ENCODE measurements at regions of chr2 and their contacts with region 1.

Region 1: DNA sequence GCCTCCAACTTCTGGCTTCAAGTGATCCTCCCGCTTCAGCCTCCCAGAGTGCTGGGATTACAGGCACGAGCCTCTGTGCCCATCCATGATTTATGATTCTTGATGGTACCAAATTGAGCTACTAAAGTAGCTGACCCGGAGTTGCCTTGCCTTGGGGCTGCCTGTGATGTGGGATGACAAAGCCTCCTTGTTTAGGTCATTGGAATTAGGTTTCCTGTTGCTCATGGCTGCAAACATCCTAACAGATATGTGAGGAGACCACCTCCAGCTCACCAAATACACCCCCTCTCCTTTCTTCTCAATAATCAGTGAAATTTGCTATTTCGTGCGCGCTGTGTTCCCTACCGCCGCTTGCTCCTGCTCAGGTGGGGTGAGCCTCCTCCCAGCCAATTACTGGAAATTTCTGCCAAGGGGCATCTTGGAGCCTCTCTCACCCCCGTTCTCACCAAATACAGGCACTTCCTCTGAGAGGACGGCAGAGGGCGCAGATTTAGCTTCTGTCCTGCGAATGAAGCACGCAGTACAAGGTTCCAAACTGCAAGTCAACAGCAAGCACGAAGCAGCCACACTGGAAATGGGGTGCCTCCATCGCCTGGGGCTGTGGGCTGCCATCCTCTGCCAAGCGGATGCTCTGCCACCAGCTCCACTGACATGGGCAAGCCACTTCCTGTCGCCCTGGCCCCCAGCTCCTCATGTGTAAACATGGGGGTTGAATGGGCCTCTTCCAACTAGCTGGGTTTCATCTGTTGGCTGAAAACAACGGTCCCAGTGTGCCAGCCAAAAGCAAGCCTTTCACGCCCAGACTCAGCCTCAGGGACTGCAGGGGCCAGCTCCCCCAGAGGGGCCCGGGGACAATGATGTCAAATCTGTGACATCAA is 71.7 kb downstream of the NCAPH start:
- DNase-seq: peak; percentile 53 to 78
- H3K4me3 ChIP-seq: no peak overlapping the region
- H3K27ac ChIP-seq: no peak overlapping the region
- H3K4me1 ChIP-seq: peaks cover 3 to 7% (median 4%) of the 10 kb centered on the region in 4 experiments
- H3K27me3 ChIP-seq: no peaks in the 10 kb centered on the region; a peak in 1 of 7 replicates
- CTCF ChIP-seq: peak; percentile 78 to 92 (median 88)
- EP300 ChIP-seq: no peak
- POLR2A ChIP-seq: no peak
- RAD21 ChIP-seq: peak; percentile 72 to 81

Region 2: GRCh38 chr2:96248624-96249023 is 158.7 kb before region 1 on chr2:
- CTCF ChIA-PET with region 1: no interaction called
- POLR2A ChIA-PET with region 1: no interaction called
- DNase-seq: no peak
- H3K4me3 ChIP-seq: no peak overlapping the region
- H3K27ac ChIP-seq: no peak overlapping the region
- H3K4me1 ChIP-seq: no peaks in the 10 kb centered on the region
- H3K27me3 ChIP-seq: no peaks in the 10 kb centered on the region
- CTCF ChIP-seq: no peak
- EP300 ChIP-seq: no peak
- POLR2A ChIP-seq: no peak
- RAD21 ChIP-seq: no peak

Region 3: DNA sequence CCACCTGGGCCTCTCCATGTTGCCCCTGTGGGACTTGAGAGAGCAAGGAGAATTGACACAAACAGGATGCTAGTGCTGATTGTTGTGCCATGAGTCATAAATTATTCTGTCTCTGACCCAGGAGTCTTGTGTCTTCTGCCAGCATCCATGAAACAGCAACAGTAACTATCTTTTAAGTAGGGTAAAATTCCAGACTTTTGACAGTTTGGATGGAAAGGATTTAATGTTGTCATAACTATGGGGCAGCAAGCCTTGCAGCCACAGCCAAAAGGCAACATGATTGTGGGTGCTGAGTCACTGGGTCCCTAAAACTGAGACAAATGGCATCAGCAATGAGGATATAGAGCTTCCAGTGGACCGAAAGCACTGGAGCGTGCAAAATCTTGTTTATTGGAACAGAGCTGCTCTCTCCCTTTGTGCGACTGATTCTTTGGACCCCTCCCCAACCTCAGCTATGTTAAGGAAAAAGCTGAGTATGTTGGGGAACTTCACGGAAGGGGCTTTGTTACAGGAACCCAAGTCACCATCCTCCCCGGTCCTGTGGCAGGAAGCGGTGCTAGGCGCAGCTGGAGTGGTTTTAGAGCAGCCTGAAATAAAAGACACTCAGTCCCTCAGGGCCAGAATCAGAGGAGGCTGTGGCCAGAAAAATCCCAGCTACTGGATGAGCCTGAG is 91.7 kb before region 1 on chr2:
- CTCF ChIA-PET with region 1: no interaction called
- POLR2A ChIA-PET with region 1: no interaction called
- DNase-seq: no peak
- H3K4me3 ChIP-seq: no peak overlapping the region
- H3K27ac ChIP-seq: no peak overlapping the region
- H3K4me1 ChIP-seq: no peaks in the 10 kb centered on the region
- H3K27me3 ChIP-seq: peaks cover 0 to 11% (median 8%) of the 10 kb centered on the region in 4 experiments; a peak in 6 of 7 replicates
- CTCF ChIP-seq: no peak
- EP300 ChIP-seq: no peak
- POLR2A ChIP-seq: no peak
- RAD21 ChIP-seq: no peak

Region 4: DNA sequence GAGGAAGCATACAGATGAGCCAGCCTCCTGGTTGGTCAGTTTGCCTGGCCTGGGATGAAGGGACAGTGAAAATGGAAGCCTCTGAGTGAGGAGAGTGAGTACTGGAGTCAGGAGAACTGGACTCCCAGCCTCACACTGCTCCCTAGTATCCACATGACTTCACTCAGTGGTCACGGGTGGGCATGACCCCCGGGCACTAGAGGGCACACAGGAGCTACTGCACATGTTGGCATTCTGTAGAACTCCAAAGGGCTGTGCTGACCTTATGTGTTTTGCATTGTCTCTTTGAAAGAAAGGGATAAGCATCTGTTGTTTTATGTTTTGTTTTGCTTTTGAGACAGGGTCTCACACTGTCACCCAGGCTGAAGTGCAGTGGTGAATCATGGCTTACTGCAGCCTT is 48.0 kb before region 1 on chr2:
- CTCF ChIA-PET with region 1: interaction called, 11 read pairs
- POLR2A ChIA-PET with region 1: no interaction called
- DNase-seq: no peak
- H3K4me3 ChIP-seq: no peak overlapping the region
- H3K27ac ChIP-seq: no peak overlapping the region
- H3K4me1 ChIP-seq: no peaks in the 10 kb centered on the region
- H3K27me3 ChIP-seq: no peaks in the 10 kb centered on the region
- CTCF ChIP-seq: peak; percentile 24 to 42 (median 32); a peak in 3 of 4 replicates
- EP300 ChIP-seq: no peak
- POLR2A ChIP-seq: no peak
- RAD21 ChIP-seq: peak; percentile 37 to 51; a peak in 3 of 4 replicates

Region 5: DNA sequence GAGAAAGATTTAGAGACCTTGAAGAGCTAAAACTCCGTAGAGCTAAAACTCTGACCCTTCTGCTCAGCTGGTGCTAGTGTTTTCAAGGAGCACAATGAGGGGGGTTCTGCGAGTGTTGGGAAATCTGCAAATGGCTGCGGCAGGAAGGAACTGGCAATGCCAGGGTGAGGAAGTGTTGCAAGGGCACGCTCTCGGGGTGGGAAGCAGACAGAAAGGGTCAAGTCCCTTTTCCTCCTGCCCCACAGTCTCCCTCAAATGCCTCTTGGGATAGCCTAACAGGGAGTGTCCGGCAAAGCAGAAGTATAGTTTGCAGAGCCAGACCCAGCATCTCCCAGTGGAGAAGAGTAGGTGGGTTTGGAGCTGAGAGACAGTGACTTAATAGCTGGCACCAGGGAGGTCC is 11.2 kb before region 1 on chr2:
- CTCF ChIA-PET with region 1: interaction called, 28 read pairs
- POLR2A ChIA-PET with region 1: interaction called, 3 read pairs
- DNase-seq: no peak
- H3K4me3 ChIP-seq: no peak overlapping the region
- H3K27ac ChIP-seq: no peak overlapping the region
- H3K4me1 ChIP-seq: peaks cover 0 to 5% (median 0%) of the 10 kb centered on the region in 4 experiments; a peak in 1 of 7 replicates
- H3K27me3 ChIP-seq: no peaks in the 10 kb centered on the region
- CTCF ChIP-seq: no peak
- EP300 ChIP-seq: no peak
- POLR2A ChIP-seq: no peak
- RAD21 ChIP-seq: no peak

Region 6: GRCh38 chr2:96449637-96450036 is 42.4 kb after region 1 on chr2:
- CTCF ChIA-PET with region 1: interaction called, 10 read pairs
- POLR2A ChIA-PET with region 1: interaction called, 3 read pairs
- DNase-seq: no peak
- H3K4me3 ChIP-seq: no peak overlapping the region
- H3K27ac ChIP-seq: no peak overlapping the region
- H3K4me1 ChIP-seq: no peaks in the 10 kb centered on the region
- H3K27me3 ChIP-seq: no peaks in the 10 kb centered on the region
- CTCF ChIP-seq: no peak
- EP300 ChIP-seq: no peak
- POLR2A ChIP-seq: no peak
- RAD21 ChIP-seq: no peak

Region 7: DNA sequence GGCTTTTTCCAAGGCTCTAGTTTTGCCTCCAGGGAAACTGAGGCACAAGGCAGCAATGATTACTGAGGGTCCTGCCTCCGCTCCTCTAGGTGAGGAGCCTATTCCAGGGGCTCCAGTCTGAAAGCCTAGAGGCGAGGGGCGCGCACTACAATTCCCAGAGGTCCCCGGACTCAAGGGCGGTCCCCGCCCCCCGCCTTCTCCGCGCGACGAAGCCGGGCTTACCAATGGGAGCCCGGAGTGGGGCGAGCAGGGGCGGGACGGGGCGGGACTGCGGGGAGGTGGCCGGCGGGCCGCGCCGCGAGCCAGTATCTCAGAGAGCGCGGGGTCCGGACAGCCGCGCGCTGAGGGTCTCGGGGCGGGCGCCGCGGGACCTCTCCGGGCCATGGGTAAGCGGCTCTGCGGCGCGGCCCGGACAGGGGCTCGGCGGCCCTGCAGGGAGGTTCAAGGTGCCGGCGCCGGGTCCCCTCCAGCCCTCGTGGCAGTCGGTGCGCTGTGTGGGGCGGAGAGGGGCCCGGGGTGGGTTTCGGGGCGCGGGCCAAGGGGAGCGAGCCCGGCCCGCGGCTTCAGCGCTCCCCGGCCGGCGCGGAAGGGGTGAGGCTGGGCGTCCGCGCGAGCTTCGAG is 129.3 kb after region 1 on chr2 and contains the start of gene ARID5A:
- CTCF ChIA-PET with region 1: interaction called, 12 read pairs
- POLR2A ChIA-PET with region 1: no interaction called
- DNase-seq: peak; percentile 73 to 89
- H3K4me3 ChIP-seq: peak within 1 kb of the TSS; percentile 19 to 73 (median 53)
- H3K27ac ChIP-seq: no peak within 1 kb of the TSS
- H3K4me1 ChIP-seq: peaks cover 5 to 26% (median 20%) of the 10 kb centered on the region in 4 experiments
- H3K27me3 ChIP-seq: peaks cover 10 to 32% (median 26%) of the 10 kb centered on the region in 4 experiments; a peak in 6 of 7 replicates
- CTCF ChIP-seq: no peak
- EP300 ChIP-seq: no peak
- POLR2A ChIP-seq: peak in 1 of 2 experiments; percentile 44; a peak in 2 of 3 replicates
- RAD21 ChIP-seq: no peak
- total RNA-seq, gene ARID5A: 4.4 and 5.3 TPM in 2 replicates

Region 8: DNA sequence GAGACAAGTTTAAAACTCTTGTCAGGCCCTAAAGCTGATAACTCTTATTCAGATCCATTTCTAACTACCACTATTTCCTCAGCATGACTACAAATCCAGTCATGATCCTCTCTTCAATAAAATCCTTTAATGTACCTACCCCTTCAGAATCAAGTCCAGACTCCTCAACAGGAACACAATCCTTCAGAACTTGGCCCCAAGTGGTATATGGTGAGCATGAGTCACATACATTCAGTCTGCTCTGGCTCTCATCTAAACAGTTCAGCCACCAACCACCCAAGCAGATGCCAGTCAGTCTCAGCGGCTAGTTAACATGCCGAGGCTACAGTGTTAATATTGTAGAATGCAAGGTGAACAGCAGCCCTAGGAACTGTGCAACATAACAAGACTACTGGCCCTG is 322.9 kb after region 1 on chr2:
- CTCF ChIA-PET with region 1: no interaction called
- POLR2A ChIA-PET with region 1: no interaction called
- DNase-seq: no peak
- H3K4me3 ChIP-seq: no peak overlapping the region
- H3K27ac ChIP-seq: no peak overlapping the region
- H3K4me1 ChIP-seq: no peaks in the 10 kb centered on the region
- H3K27me3 ChIP-seq: no peaks in the 10 kb centered on the region
- CTCF ChIP-seq: no peak
- EP300 ChIP-seq: no peak
- POLR2A ChIP-seq: no peak
- RAD21 ChIP-seq: no peak